ENCODE measurements at regions of chr2 and their contacts with region 1.

Region 1: DNA sequence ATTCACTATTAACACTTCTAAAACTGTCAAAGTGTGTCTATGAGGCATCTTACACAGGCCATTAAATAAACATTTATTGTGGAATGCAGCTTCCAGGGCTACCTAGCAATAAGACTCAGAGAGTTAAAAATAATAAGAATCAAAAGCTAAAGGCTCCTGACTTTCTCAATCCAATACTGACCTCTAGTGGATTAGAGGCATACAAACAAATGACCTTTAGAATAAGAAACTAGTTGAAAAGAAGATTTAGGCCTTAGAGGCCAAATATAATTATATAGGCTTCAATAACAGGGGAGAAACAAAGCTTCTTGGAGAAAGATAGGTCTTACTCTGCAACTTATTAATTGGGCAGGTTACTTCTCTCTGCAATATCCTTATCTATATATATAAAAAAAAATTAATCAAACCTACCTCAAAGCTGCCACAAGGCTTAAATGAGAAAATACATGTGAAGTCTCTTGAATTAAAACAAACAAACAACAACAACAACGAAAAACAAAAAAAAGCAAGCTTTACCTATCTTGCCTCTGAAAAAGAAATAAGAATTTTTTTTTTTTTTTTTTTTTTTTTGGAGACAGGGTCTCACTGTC is 246.1 kb downstream of the EXOC6B start:
- DNase-seq: peak; percentile 11
- H3K4me3 ChIP-seq: no peak overlapping the region
- H3K27ac ChIP-seq: no peak overlapping the region
- H3K27me3 ChIP-seq: no peaks in the 10 kb centered on the region
- CTCF ChIP-seq: peak; percentile 71

Region 2: DNA sequence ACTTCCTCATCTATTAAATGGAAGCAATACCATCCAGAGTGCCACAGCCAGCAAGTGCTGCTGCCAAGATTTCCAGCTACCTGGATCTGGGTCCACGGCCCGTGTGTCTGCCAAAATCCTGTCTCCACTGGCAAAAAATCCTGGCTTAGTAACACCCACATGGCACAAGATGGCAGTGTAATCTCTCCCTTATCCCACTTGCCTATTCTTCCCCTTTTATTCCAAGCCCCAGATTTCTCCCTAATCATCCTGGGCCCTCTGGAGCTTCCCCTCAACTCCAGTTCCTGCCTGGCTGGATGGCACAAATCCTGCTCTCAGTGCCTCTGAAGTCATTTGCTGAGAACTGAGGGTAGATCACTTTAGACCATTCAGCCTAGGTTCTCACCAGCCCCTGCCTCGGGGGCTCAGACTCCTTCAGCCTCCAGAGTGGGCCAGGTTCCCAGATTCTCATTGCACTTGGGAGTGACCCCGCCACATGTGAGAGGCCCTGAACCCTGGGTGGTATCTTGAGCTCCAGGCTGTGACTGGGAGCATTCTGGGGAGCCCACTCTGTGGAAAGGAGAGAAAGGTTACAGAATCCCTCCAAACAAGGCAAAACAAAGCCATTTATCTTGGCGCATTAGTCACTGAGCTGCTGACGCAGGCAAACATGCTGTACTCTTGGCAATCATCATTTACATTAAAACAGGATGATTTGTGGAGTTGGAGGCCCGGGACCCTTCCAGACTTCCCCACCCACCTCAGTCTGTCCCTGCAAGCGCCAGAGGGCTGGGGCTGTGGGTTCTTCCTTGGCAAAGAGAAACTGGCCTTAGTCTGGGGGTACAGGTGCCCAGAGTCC is 800.5 kb before region 1 on chr2:
- CTCF ChIA-PET with region 1: interaction called, 11 read pairs
- POLR2A ChIA-PET with region 1: no interaction called
- DNase-seq: peak; percentile 39
- H3K4me3 ChIP-seq: no peak overlapping the region
- H3K27ac ChIP-seq: peak overlapping the region; percentile 70
- H3K27me3 ChIP-seq: peaks cover 7% of the 10 kb centered on the region
- CTCF ChIP-seq: peak; percentile 45

Region 3: DNA sequence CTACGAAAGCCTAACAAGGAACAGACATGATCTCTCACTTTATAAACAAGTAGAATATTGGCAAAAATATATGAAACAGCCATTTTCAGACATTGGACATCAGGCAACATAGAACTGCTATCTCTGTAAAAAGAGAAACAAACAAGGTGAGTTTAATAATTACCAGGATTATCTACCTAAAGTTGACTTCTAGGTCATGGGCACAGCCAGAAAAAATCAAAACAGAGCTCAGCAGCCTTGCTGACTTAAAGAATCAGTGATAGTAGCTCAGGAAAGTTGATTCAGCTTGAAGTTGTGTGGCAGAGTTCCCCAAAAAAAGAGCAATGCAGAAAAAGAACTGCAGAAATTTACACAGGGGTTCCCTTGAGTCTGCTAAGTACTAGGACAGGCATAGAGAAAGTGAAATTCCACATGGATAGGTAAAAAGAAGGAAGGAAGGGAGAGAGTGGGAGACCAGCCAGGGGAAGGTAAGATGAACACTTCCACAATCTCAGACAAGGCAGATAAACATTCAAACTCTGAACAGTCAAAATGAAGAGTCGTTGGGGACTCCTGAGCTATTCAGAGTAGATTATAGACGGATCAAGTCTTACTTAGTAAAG is 144.2 kb after region 1 on chr2:
- CTCF ChIA-PET with region 1: interaction called, 12 read pairs
- POLR2A ChIA-PET with region 1: no interaction called
- DNase-seq: no peak
- H3K4me3 ChIP-seq: no peak overlapping the region
- H3K27ac ChIP-seq: no peak overlapping the region
- H3K27me3 ChIP-seq: no peaks in the 10 kb centered on the region
- CTCF ChIP-seq: no peak

Measured in AG04450 (cell line).